Activated CD4-positive, alpha-beta memory T cell treated with anti-CD3 and anti-CD28 coated beads, Interleukin-2, amount 10 ng/mL, durations not matched to agents 7 days and 5 days (primary cell): ENCODE measurements at regions of chr22 and their contacts with region 1.

Region 1: DNA sequence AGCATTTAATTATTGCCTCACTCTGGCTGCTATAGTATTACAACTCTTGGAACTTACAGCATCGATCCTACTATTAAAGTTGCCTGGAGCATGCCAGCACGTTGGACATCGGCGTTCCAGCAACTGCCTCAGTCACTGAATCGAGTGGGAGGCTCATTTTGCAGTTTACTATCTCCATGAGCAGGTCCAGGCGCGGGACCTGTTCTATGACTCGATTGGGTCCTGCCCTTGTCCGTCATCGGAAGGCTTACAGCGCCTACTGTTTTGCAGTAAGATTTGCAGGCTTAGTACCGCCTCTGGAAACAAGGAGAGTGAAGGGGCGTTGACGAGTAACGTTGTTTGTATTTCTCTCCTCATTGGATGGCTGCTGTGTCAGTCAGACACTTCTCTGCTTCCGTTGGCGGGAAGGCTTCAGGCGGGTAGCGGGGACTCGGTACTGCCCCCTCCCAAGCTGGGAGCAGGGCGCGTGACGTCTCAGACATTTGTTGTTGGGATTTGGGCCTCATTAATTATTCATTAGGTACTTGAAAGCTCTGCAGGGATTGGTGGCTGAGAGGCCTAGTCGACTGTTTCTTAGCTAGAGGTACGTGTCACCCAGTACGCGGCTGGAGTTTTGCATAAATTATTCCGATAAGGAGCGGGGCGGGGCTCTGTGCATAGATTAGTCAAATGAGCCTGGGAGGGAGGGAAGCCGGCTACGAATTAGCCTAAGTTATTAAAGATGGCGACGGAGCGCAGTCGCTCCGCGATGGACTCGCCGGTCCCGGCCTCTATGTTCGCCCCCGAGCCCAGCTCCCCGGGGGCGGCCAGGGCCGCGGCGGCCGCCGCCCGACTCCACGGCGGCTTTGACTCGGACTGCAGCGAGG is at the start of gene GTPBP1:
- DNase-seq: peak; percentile 98
- H3K4me3 Mint-ChIP-seq: peak within 1 kb of the TSS; percentile 85
- H3K27ac Mint-ChIP-seq: peak within 1 kb of the TSS; percentile 95
- H3K4me1 Mint-ChIP-seq: peaks cover 51% of the 10 kb centered on the region
- H3K27me3 Mint-ChIP-seq: no peaks in the 10 kb centered on the region
- total RNA-seq, gene GTPBP1: 111 to 114 TPM

Region 2: GRCh38 chr22:38681784-38682335 is 23.6 kb before region 1 on chr22 and contains the start of gene TOMM22:
- CTCF ChIA-PET with region 1: interaction called, 6 read pairs
- POLR2A ChIA-PET with region 1: interaction called, 139 read pairs
- DNase-seq: peak; percentile 85
- H3K4me3 Mint-ChIP-seq: peak within 1 kb of the TSS; percentile 100
- H3K27ac Mint-ChIP-seq: peak within 1 kb of the TSS; percentile 95
- H3K4me1 Mint-ChIP-seq: peaks cover 25% of the 10 kb centered on the region
- H3K27me3 Mint-ChIP-seq: no peaks in the 10 kb centered on the region
- total RNA-seq, gene TOMM22: 60.4 to 63.0 TPM

Region 3: GRCh38 chr22:38718414-38718813 is 12.9 kb after region 1 on chr22:
- CTCF ChIA-PET with region 1: interaction called, 3 read pairs
- POLR2A ChIA-PET with region 1: interaction called, 13 read pairs
- DNase-seq: no peak
- H3K4me3 Mint-ChIP-seq: no peak overlapping the region
- H3K27ac Mint-ChIP-seq: no peak overlapping the region
- H3K4me1 Mint-ChIP-seq: peaks cover 19% of the 10 kb centered on the region
- H3K27me3 Mint-ChIP-seq: no peaks in the 10 kb centered on the region

Region 4: DNA sequence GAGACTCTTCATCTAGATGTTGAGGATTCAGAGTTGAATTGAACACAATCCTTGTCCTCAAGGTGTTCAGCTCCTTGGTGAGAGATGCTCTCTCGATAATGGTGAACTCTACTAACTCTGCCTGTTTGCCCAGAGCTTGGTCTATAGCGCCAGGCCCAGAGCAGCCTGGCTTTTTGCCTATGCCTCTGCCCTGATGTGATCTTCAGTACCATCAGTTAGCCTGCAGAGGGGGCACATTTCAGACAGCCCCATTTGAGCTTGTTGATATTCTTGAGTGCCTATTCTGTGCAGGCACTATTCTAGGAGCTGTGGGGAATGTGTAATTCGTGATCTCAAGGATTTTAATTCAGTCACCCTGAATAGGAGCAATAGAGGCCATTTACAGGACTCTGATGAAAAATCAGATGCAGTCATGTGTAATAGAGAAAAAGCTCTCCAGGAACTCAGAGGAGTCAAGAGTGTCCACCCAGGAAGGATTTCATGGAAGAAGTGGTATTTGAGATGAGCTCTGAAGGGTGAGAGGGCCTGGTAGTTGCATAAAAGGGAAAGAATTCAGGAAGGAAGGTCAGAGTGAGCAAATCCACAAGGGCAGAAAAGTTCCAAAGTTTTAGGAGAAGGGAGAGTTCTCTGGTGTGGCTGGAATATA is 19.6 kb after region 1 on chr22:
- CTCF ChIA-PET with region 1: interaction called, 17 read pairs
- POLR2A ChIA-PET with region 1: interaction called, 86 read pairs
- DNase-seq: peak; percentile 40
- H3K4me3 Mint-ChIP-seq: no peak overlapping the region
- H3K27ac Mint-ChIP-seq: peak overlapping the region; percentile 13
- H3K4me1 Mint-ChIP-seq: peaks cover 3% of the 10 kb centered on the region
- H3K27me3 Mint-ChIP-seq: no peaks in the 10 kb centered on the region

Region 5: DNA sequence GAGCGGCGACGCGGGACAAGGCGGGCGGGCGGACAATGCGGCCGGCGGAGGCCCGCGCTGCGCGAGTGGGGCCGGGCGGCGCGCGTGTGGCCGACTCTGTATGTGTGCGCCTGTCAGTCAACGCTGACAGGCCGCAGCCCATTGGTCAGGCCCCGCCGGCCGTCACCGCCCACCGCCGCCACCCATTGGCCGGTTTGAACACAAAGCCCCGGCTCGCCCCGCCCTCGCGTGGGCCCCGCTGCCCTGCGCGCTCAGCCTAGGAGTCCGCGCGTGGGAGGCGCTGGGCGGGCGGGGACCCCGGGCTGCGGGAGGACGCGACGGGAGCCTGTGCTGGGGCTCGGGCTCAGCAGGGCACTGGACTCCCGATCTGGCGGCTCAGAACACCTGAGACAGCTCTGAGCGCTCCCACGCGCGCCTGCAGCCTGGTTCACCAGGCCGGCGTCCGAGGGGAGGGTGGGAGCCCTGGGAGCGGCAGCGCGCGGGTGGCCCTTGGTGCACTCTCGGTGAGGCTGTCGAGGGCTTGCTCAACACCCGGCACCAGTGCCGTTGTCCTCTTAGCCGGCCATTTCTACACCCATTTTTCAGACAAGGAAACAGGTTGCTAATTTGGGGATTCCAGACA is 50.6 kb after region 1 on chr22 and contains the start of gene SUN2:
- CTCF ChIA-PET with region 1: interaction called, 6 read pairs
- POLR2A ChIA-PET with region 1: interaction called, 50 read pairs
- DNase-seq: peak; percentile 95
- H3K4me3 Mint-ChIP-seq: peak within 1 kb of the TSS; percentile 95
- H3K27ac Mint-ChIP-seq: peak within 1 kb of the TSS; percentile 100
- H3K4me1 Mint-ChIP-seq: peaks cover 53% of the 10 kb centered on the region
- H3K27me3 Mint-ChIP-seq: no peaks in the 10 kb centered on the region
- total RNA-seq, gene SUN2: 498 to 500 TPM